WTC11 (cell line): ENCODE measurements at regions of chr1 and their contacts with region 1.

Region 1: GRCh38 chr1:223087291-223088255 is 55.5 kb downstream of the TLR5 start:
- DNase-seq: no peak
- ATAC-seq: no peak
- H3K4me3 Mint-ChIP-seq: no peak overlapping the region
- H3K27ac Mint-ChIP-seq: no peak overlapping the region
- H3K4me1 Mint-ChIP-seq: peaks cover 27% of the 10 kb centered on the region
- H3K27me3 Mint-ChIP-seq: peaks cover 58% of the 10 kb centered on the region
- CTCF ChIP-seq: no peak

Region 2: DNA sequence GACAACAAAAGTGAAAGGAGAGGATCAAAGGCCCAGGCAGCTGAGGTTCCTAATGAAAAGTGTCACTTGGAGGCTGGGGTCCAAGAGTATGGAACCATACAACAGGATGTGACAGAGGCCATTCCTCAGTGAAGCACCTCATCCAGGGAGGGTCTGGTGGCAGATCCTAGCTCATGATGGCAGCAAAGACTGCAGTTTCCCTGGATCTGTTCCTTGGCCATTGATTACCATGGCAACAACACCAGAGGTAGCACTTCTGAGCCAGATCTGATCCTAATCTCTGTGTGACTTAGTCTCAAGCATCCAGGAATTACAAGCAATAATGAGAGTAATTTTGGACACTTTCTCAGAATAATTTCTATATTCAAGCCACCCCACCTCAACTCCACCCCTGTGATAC is 337.6 kb before region 1 on chr1:
- CTCF ChIA-PET with region 1: interaction called, 11 read pairs
- POLR2A ChIA-PET with region 1: no interaction called
- DNase-seq: no peak
- ATAC-seq: peak; percentile 71
- H3K4me3 Mint-ChIP-seq: no peak overlapping the region
- H3K27ac Mint-ChIP-seq: no peak overlapping the region
- H3K4me1 Mint-ChIP-seq: no peaks in the 10 kb centered on the region
- H3K27me3 Mint-ChIP-seq: no peaks in the 10 kb centered on the region
- CTCF ChIP-seq: no peak

Region 3: DNA sequence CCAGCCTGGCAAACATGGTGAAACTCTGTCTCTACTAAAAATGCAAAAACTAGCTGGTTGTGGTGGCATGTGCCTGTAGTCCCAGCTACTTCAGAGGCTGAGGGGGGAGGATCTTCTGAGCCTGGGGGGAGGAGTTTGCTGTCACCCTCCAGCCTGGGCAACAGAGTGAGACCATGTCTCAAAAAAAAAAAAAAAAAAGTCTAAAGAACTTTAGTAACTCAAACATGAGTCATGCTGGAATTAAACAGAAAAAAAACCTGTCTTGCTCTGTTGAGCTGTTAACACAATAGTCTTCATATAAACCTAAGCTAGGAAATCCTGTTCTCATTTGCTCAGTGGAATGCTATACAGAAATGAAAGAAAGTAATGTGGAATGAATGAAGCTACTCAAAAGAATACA is 289.5 kb before region 1 on chr1:
- CTCF ChIA-PET with region 1: interaction called, 28 read pairs
- POLR2A ChIA-PET with region 1: no interaction called
- DNase-seq: no peak
- ATAC-seq: no peak
- H3K4me3 Mint-ChIP-seq: no peak overlapping the region
- H3K27ac Mint-ChIP-seq: no peak overlapping the region
- H3K4me1 Mint-ChIP-seq: peaks cover 4% of the 10 kb centered on the region; the same call in 1 of the 2 replicates
- H3K27me3 Mint-ChIP-seq: peaks cover 41% of the 10 kb centered on the region
- CTCF ChIP-seq: no peak

Region 4: GRCh38 chr1:223035724-223036478 is 51.7 kb before region 1 on chr1:
- CTCF ChIA-PET with region 1: interaction called, 14 read pairs
- POLR2A ChIA-PET with region 1: no interaction called
- DNase-seq: no peak
- ATAC-seq: no peak
- H3K4me3 Mint-ChIP-seq: no peak overlapping the region
- H3K27ac Mint-ChIP-seq: no peak overlapping the region
- H3K4me1 Mint-ChIP-seq: peaks cover 79% of the 10 kb centered on the region
- H3K27me3 Mint-ChIP-seq: peaks cover 7% of the 10 kb centered on the region
- CTCF ChIP-seq: no peak

Region 5: GRCh38 chr1:223102797-223103533 is 15.4 kb after region 1 on chr1:
- CTCF ChIA-PET with region 1: interaction called, 26 read pairs
- POLR2A ChIA-PET with region 1: no interaction called
- DNase-seq: no peak
- ATAC-seq: peak; percentile 56; the same call in 1 of the 2 replicates
- H3K4me3 Mint-ChIP-seq: no peak overlapping the region
- H3K27ac Mint-ChIP-seq: no peak overlapping the region
- H3K4me1 Mint-ChIP-seq: 0 out of 2 replicates have a peak, but pooled peaks cover 5% of the 10 kb centered on the region
- H3K27me3 Mint-ChIP-seq: peaks cover 23% of the 10 kb centered on the region
- CTCF ChIP-seq: no peak

Region 6: GRCh38 chr1:223123011-223123610 is 35.5 kb after region 1 on chr1:
- CTCF ChIA-PET with region 1: interaction called, 67 read pairs
- POLR2A ChIA-PET with region 1: no interaction called
- DNase-seq: no peak
- ATAC-seq: no peak
- H3K4me3 Mint-ChIP-seq: peak overlapping the region; percentile 20; the same call in 1 of the 2 replicates
- H3K27ac Mint-ChIP-seq: no peak overlapping the region
- H3K4me1 Mint-ChIP-seq: peaks cover 33% of the 10 kb centered on the region
- H3K27me3 Mint-ChIP-seq: peaks cover 13% of the 10 kb centered on the region
- CTCF ChIP-seq: no peak